GM12878 (cell line): ENCODE measurements at regions of chr19 and their contacts with region 1.

Region 1: GRCh38 chr19:45059278-45059965 is 16.9 kb downstream of the ZNF296 start:
- DNase-seq: no peak
- ATAC-seq: peak; percentile 97
- H3K4me3 ChIP-seq: no peak overlapping the region
- H3K27ac ChIP-seq: no peak overlapping the region
- H3K4me1 ChIP-seq: no peaks in the 10 kb centered on the region
- H3K27me3 ChIP-seq: no peaks in the 10 kb centered on the region
- CTCF ChIP-seq: peak; percentile 90 to 97 (median 90)
- EP300 ChIP-seq: no peak
- POLR2A ChIP-seq: no peak
- RAD21 ChIP-seq: peak; percentile 93

Region 2: DNA sequence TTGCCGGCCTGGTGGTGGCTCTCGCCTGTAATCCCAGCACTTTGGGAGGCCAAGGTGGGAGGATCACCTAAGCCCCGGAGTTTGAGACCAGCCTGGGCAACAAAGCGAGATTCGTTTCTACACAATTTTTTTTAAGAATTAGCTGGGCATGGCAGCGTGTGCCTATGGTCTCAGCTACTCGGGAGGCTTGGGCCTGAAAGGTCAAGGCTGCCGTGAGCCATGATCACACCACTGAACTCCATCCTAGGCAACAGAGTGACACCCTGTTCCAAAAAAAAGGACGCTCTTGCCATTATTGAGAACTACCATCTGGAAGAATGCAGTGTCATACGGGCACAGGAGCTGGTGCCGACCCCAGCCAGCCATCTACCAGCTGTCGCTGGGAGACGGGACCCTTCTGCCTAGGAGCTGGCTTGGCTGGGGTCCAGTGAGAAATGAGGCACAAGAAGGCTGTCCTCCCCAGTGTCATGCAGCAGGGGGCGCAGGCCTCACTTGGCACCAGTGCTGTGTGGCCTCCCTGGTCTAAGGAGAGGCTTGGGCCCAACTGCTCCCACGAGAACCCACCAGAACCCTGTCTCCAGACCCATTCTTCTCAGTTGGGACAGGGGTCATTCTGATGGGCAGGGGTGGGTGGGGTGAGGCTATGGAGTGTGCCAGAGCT is 70.4 kb before region 1 on chr19:
- CTCF ChIA-PET with region 1: interaction called, 70 read pairs
- POLR2A ChIA-PET with region 1: interaction called, 3 read pairs
- RAD21 ChIA-PET with region 1: interaction called, 29 read pairs
- SMC1A ChIA-PET with region 1: interaction called, 10 read pairs
- in situ Hi-C with region 1: no loop called
- intact Hi-C with region 1: loop called (anchors 1 kb)
- DNase-seq: no peak
- ATAC-seq: peak; percentile 90
- H3K4me3 ChIP-seq: no peak overlapping the region
- H3K27ac ChIP-seq: no peak overlapping the region
- H3K4me1 ChIP-seq: peaks cover 12% of the 10 kb centered on the region
- H3K27me3 ChIP-seq: no peaks in the 10 kb centered on the region
- CTCF ChIP-seq: peak; percentile 68 to 87 (median 80)
- EP300 ChIP-seq: no peak
- POLR2A ChIP-seq: no peak
- RAD21 ChIP-seq: peak; percentile 67

Region 3: DNA sequence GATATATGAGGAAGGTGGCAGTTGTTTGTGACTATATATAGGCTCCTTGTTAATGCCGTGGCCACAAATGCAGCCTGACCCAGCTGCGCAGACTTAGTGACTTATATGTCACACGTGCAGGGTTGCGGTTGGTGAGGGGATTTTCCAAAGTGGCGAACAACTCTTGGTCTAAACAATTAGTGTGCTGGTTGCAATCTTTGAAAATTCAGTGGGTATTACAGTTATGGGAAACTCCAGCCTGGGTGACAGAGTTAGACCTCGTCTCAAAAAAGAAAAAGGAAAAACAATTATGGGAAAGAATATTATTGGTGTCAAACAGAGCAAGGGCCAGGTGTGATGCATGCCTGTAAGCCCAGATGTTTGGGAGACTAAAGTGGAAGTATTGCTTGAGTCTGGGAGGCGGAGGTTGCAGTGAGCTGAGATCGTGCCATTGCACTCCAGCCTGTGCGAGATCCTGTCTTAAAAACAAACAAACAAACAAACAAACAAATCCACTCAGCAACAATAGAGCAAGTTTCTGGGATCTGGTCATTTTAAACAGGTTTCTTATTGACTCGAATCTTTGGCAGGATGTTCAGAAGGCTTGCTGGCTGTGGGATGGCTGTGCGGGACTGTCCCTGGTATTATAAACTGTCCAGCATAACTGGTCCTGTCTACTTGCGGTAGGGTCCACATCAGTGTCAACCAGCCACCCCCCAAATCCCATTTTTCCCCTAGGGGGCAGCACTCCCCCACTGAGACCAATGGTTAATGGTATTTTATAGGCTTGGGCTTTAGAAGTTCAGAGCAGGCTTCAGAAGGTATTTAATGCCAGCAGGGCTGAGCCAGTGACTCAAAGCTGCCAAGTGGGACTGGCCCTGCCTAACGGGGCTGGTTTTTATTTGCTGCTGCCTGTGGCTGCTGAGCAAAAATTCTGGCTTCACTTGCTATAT is 42.8 kb before region 1 on chr19:
- CTCF ChIA-PET with region 1: interaction called, 7 read pairs
- POLR2A ChIA-PET with region 1: no interaction called
- RAD21 ChIA-PET with region 1: interaction called, 3 read pairs
- SMC1A ChIA-PET with region 1: interaction called, 4 read pairs
- in situ Hi-C with region 1: no loop called
- intact Hi-C with region 1: loop called (anchors 1 kb)
- DNase-seq: peak; percentile 94
- ATAC-seq: peak; percentile 91
- H3K4me3 ChIP-seq: peak overlapping the region; percentile 60
- H3K27ac ChIP-seq: peak overlapping the region; percentile 89
- H3K4me1 ChIP-seq: peaks cover 20% of the 10 kb centered on the region
- H3K27me3 ChIP-seq: no peaks in the 10 kb centered on the region
- CTCF ChIP-seq: peak; percentile 74 to 81 (median 79)
- EP300 ChIP-seq: peak; percentile 75 to 91; a peak in 3 of 4 replicates
- POLR2A ChIP-seq: no peak; the same call in 1 of the 2 replicates
- RAD21 ChIP-seq: peak; percentile 87

Region 4: DNA sequence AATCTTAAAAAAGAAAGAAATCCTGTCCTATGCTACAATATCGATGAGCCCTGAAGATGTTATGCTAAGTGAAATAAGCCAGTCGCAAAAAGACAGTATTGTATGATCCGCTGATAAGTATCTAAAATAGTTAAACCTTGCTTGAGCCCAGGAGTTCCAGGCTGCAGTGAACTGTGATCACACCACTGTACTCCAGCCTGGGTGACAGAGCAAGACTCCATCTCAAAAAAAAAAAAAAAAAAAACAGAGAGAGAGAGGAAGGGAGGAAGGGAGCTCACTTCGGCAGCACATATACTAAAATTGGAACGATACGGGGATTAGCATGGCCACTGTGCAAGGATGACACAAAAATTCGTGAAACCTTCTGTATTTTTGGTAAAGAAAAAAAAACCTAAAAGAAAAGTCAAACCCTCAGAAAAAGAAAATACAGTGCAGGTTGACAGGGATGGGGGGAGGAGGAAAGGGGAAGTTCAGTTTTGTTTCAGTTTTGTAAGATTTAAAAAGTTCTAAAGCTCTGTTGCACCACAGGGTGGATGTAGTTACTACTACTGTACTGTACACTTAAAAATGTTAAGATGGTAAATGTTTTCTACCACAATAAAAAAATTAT is 12.1 kb before region 1 on chr19:
- CTCF ChIA-PET with region 1: interaction called, 16 read pairs
- POLR2A ChIA-PET with region 1: no interaction called
- RAD21 ChIA-PET with region 1: interaction called, 12 read pairs
- SMC1A ChIA-PET with region 1: interaction called, 7 read pairs
- in situ Hi-C with region 1: no loop called
- intact Hi-C with region 1: no loop called
- DNase-seq: peak; percentile 34
- ATAC-seq: peak; percentile 93
- H3K4me3 ChIP-seq: peak overlapping the region; percentile 48
- H3K27ac ChIP-seq: peak overlapping the region; percentile 67
- H3K4me1 ChIP-seq: peaks cover 36% of the 10 kb centered on the region
- H3K27me3 ChIP-seq: no peaks in the 10 kb centered on the region
- CTCF ChIP-seq: peak in 1 of 3 experiments; percentile 44; a peak in 1 of 6 replicates
- EP300 ChIP-seq: no peak
- POLR2A ChIP-seq: no peak
- RAD21 ChIP-seq: no peak; the same call in 1 of the 2 replicates